ENCODE measurements at regions of chr11 and their contacts with region 1.

Region 1: GRCh38 chr11:19561011-19561410 is 151.6 kb upstream of the NAV2 start:
- DNase-seq: no peak
- H3K4me3 ChIP-seq: no peak overlapping the region
- H3K4me3 Mint-ChIP-seq: no peak overlapping the region
- H3K27ac ChIP-seq: no peak overlapping the region
- H3K27ac Mint-ChIP-seq: no peak overlapping the region
- H3K4me1 ChIP-seq: no peaks in the 10 kb centered on the region
- H3K4me1 Mint-ChIP-seq: peaks cover 4 to 6% (median 5%) of the 10 kb centered on the region in 3 donors
- H3K27me3 ChIP-seq: peaks cover 10% of the 10 kb centered on the region
- H3K27me3 Mint-ChIP-seq: peaks cover 7 to 22% of the 10 kb centered on the region in 2 donors

Region 2: DNA sequence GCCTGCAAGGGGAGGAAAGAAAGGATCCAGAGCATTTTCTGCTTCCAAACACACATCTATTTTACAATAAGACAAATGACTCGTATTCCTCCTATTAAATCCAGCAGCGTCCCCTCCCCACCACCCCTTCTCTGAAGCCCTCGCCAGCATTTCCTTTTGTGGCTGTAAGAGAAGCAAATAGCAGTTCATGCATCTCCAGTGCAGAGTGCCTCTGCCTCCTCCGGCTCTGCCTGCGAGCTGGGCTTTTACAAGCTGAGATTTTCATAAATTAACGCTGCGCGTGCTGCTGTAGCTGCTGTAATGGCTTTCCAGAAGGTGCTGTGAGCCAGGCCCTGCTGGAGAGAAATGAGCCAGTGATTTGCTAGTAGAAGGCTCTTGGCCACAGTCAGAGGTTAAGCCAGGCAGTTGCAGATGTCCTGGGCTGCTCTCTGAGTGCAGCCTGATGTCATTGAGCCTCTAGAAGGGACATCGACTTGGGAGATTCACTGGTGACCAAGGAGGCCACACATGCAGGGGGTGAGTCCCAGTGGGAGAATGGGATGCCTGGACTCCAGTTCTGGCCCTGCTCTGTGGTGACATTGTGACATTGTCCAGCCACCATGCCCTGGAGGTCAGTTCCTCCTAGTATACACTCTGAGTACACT is 17.1 kb after region 1 on chr11:
- CTCF ChIA-PET with region 1: interaction called, 13 read pairs
- POLR2A ChIA-PET with region 1: no interaction called
- DNase-seq: no peak
- H3K4me3 ChIP-seq: no peak overlapping the region
- H3K4me3 Mint-ChIP-seq: no peak overlapping the region
- H3K27ac ChIP-seq: no peak overlapping the region
- H3K27ac Mint-ChIP-seq: no peak overlapping the region
- H3K4me1 ChIP-seq: no peaks in the 10 kb centered on the region
- H3K4me1 Mint-ChIP-seq: no peaks in the 10 kb centered on the region
- H3K27me3 ChIP-seq: no peaks in the 10 kb centered on the region
- H3K27me3 Mint-ChIP-seq: peaks cover 0 to 1% of the 10 kb centered on the region in 2 donors

Region 3: GRCh38 chr11:19735157-19735908 is 174.3 kb after region 1 on chr11:
- CTCF ChIA-PET with region 1: interaction called, 14 read pairs
- POLR2A ChIA-PET with region 1: no interaction called
- DNase-seq: no peak
- H3K4me3 ChIP-seq: no peak overlapping the region
- H3K4me3 Mint-ChIP-seq: no peak overlapping the region
- H3K27ac ChIP-seq: no peak overlapping the region
- H3K27ac Mint-ChIP-seq: peak overlapping the region in 2 of 8 donors; percentile 4 to 81
- H3K4me1 ChIP-seq: no peaks in the 10 kb centered on the region
- H3K4me1 Mint-ChIP-seq: no peaks in the 10 kb centered on the region
- H3K27me3 ChIP-seq: no peaks in the 10 kb centered on the region
- H3K27me3 Mint-ChIP-seq: peaks cover 3 to 7% of the 10 kb centered on the region in 2 donors

Measured in CD8-positive, alpha-beta memory T cell (primary cell).